ENCODE measurements at regions of chr5 and their contacts with region 1.

Region 1: GRCh38 chr5:32709781-32710549 is 1.2 kb upstream of the NPR3 start:
- DNase-seq: peak; percentile 65 to 78
- H3K4me3 ChIP-seq: peak overlapping the region; percentile 36
- H3K4me3 Mint-ChIP-seq: peak overlapping the region; percentile 76
- H3K27ac Mint-ChIP-seq: no peak overlapping the region
- H3K4me1 ChIP-seq: no peaks in the 10 kb centered on the region
- H3K4me1 Mint-ChIP-seq: no peaks in the 10 kb centered on the region
- H3K27me3 ChIP-seq: no peaks in the 10 kb centered on the region
- H3K27me3 Mint-ChIP-seq: peaks cover 6% of the 10 kb centered on the region
- CTCF ChIP-seq: peak; percentile 73 to 78

Region 2: DNA sequence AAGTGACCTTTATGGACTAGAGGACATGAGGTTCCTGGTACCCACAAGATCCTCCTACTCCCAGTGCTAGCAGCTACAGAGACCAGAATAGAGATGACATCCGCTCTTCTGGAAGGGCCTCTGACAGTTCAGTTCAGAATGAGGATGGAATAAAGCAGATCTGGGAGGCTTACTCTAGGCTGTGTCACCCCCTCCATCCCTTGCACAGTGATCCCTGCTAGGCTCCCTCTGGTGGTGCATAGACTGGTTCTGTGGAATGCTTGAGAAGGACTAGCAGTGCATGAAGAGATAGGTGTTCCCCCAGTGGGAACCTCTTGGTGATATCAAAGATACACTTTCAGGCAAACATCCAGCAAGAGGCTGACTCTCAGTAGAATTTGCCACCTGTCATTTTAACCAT is 84.1 kb after region 1 on chr5:
- CTCF ChIA-PET with region 1: no interaction called
- POLR2A ChIA-PET with region 1: no interaction called
- intact Hi-C with region 1: loop called (anchors 1 kb)
- DNase-seq: peak in 1 of 2 experiments; percentile 9
- H3K4me3 ChIP-seq: no peak overlapping the region
- H3K4me3 Mint-ChIP-seq: no peak overlapping the region
- H3K27ac Mint-ChIP-seq: no peak overlapping the region
- H3K4me1 ChIP-seq: no peaks in the 10 kb centered on the region
- H3K4me1 Mint-ChIP-seq: no peaks in the 10 kb centered on the region
- H3K27me3 ChIP-seq: no peaks in the 10 kb centered on the region; the same call in 1 of the 2 replicates
- H3K27me3 Mint-ChIP-seq: peaks cover 7% of the 10 kb centered on the region
- CTCF ChIP-seq: no peak

Region 3: GRCh38 chr5:32916648-32917047 is 206.7 kb after region 1 on chr5:
- CTCF ChIA-PET with region 1: no interaction called
- POLR2A ChIA-PET with region 1: no interaction called
- intact Hi-C with region 1: loop called (anchors 1 kb)
- DNase-seq: peak in 1 of 2 experiments; percentile 19
- H3K4me3 ChIP-seq: no peak overlapping the region
- H3K4me3 Mint-ChIP-seq: no peak overlapping the region
- H3K27ac Mint-ChIP-seq: no peak overlapping the region
- H3K4me1 ChIP-seq: no peaks in the 10 kb centered on the region
- H3K4me1 Mint-ChIP-seq: no peaks in the 10 kb centered on the region
- H3K27me3 ChIP-seq: no peaks in the 10 kb centered on the region
- H3K27me3 Mint-ChIP-seq: no peaks in the 10 kb centered on the region
- CTCF ChIP-seq: peak; percentile 14 to 55

Region 4: DNA sequence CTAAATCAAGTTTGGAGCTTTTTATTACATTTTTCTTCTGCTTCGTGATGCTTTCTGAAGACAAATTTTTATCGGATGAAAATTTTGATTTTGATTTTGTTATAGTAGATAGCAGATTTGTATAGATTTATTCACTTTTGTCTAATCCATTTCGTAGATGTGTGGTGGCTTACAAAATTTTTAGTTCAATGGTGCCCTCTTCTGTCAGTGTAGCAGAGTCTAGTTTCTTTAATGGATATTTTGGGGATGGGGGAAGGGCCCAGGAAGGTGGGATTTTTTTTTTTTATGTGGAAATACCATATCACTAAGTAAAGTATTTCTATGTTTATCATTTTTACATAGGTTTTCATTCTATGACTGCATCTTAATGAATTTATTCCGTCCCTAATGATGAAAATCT is 470.9 kb after region 1 on chr5:
- CTCF ChIA-PET with region 1: no interaction called
- POLR2A ChIA-PET with region 1: no interaction called
- intact Hi-C with region 1: loop called (anchors 1 kb)
- DNase-seq: peak in 1 of 2 experiments; percentile 14
- H3K4me3 ChIP-seq: no peak overlapping the region
- H3K4me3 Mint-ChIP-seq: no peak overlapping the region
- H3K27ac Mint-ChIP-seq: no peak overlapping the region
- H3K4me1 ChIP-seq: no peaks in the 10 kb centered on the region
- H3K4me1 Mint-ChIP-seq: peaks cover 7% of the 10 kb centered on the region
- H3K27me3 ChIP-seq: no peaks in the 10 kb centered on the region
- H3K27me3 Mint-ChIP-seq: peaks cover 7% of the 10 kb centered on the region
- CTCF ChIP-seq: peak; percentile 10 to 27

Region 5: GRCh38 chr5:33423018-33423630 is 713.2 kb after region 1 on chr5:
- CTCF ChIA-PET with region 1: no interaction called
- POLR2A ChIA-PET with region 1: no interaction called
- intact Hi-C with region 1: loop called (anchors 1 kb)
- DNase-seq: peak in 1 of 2 experiments; percentile 11
- H3K4me3 ChIP-seq: no peak overlapping the region
- H3K4me3 Mint-ChIP-seq: no peak overlapping the region
- H3K27ac Mint-ChIP-seq: no peak overlapping the region
- H3K4me1 ChIP-seq: no peaks in the 10 kb centered on the region
- H3K4me1 Mint-ChIP-seq: no peaks in the 10 kb centered on the region
- H3K27me3 ChIP-seq: no peaks in the 10 kb centered on the region
- H3K27me3 Mint-ChIP-seq: peaks cover 20% of the 10 kb centered on the region
- CTCF ChIP-seq: peak; percentile 37 to 40

Measured in Caco-2 (cell line).